GM10248 (cell line): ENCODE measurements at regions of chr13 and their contacts with region 1.

Region 1: DNA sequence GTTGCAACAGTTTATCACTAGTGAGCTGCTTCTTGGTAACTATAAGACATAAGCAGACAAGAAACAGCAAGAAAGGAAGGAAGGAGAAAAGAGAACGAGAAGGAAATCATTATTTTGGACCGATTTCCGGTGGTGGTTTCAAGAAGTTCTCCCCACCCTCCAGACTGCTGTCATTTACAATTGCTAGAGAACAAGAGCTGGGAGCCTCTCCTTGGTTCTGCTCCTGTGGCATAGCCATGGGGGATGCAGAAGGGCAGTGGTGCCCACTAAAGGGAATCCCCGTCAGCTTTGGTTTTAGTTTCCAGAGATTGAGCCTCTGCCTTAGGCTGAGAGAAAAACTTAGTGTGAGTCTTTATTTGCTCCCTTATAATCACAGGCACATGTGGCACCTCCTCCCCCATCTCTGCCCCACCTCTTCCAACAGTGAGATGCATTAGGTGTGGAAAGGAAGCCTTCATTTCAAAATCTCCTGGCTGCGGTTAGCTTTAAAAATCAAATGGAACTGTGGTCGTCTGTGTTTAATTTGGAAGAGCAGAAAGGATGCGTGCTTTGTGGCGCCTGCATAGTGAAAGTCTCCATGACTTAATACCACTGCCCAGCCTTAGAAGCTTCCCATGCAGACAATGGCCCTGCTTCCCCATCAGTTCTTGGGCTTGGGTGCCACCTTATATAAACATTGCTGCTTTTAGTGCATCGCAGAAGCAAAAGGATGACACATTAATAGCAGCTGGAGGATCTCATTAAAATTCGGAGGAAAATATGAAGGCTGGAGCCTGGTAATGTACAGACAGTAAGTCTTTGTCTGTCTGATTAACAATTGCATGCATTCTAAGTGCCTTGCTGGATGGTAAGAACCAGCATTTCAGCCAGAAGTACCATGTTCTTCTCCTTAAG is 25.0 kb downstream of the LRCH1 start:
- DNase-seq: no peak
- CTCF ChIP-seq: no peak

Region 2: GRCh38 chr13:46595136-46595886 is 17.4 kb after region 1 on chr13:
- CTCF ChIA-PET with region 1: interaction called, 35 read pairs
- POLR2A ChIA-PET with region 1: interaction called, 3 read pairs
- DNase-seq: no peak
- CTCF ChIP-seq: no peak

Region 3: DNA sequence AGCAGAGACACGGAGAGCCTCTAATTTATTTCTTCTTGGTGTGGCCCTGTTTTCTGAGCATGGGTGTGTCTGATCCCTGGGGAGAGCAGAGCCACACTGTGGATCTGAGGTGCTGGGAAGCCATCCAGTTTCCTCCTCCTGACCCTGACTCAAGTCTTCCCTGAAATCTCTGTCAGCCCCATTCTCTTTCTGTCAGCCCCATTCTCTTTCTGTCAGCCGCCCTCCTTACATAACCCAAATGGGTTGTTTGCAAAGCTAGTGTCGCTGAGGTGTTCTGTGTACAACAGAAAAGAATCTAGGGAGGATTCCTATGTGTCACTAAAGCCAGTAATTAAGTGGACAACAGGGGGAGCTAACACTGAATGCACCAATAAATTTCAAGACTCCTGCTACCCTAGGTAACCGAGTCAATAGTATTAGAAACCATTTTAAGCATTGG is 25.2 kb after region 1 on chr13:
- CTCF ChIA-PET with region 1: interaction called, 12 read pairs
- POLR2A ChIA-PET with region 1: no interaction called
- DNase-seq: no peak
- CTCF ChIP-seq: peak; percentile 31